ENCODE measurements at regions of chr2 and their contacts with region 1.

Region 1: GRCh38 chr2:197191177-197191939 is 119.2 kb downstream of the ANKRD44 start:
- DNase-seq: no peak
- H3K4me3 Mint-ChIP-seq: no peak overlapping the region
- H3K27ac Mint-ChIP-seq: peak overlapping the region; percentile 62
- H3K4me1 Mint-ChIP-seq: peaks cover 71% of the 10 kb centered on the region
- H3K27me3 Mint-ChIP-seq: no peaks in the 10 kb centered on the region

Region 2: DNA sequence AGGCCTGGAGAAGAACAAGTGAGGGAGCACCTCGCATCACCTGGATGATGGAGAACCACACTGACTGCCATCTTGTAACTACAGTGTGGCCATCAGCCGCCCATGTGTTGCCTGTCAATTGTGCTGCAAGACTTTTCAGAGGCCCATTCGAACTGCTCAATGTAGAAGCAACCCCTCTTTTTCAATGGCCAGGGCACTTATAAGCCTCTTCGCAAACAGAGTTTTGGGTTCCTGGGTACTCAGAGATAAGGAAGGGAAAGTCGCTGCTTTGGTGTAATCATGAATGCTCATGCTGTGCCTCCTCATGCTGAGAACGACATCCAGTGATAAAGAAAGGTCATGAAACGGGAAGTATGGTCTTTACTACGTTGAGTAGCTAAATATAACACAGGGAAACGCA is 1678.2 kb before region 1 on chr2:
- CTCF ChIA-PET with region 1: no interaction called
- POLR2A ChIA-PET with region 1: no interaction called
- intact Hi-C with region 1: no loop called
- DNase-seq: no peak
- H3K4me3 Mint-ChIP-seq: no peak overlapping the region
- H3K27ac Mint-ChIP-seq: no peak overlapping the region
- H3K4me1 Mint-ChIP-seq: peaks cover 10% of the 10 kb centered on the region
- H3K27me3 Mint-ChIP-seq: no peaks in the 10 kb centered on the region

Region 3: GRCh38 chr2:197113275-197113711 is 78.1 kb before region 1 on chr2:
- CTCF ChIA-PET with region 1: interaction called, 28 read pairs
- POLR2A ChIA-PET with region 1: no interaction called
- intact Hi-C with region 1: no loop called
- DNase-seq: no peak
- H3K4me3 Mint-ChIP-seq: no peak overlapping the region
- H3K27ac Mint-ChIP-seq: peak overlapping the region; percentile 76
- H3K4me1 Mint-ChIP-seq: peaks cover 20% of the 10 kb centered on the region
- H3K27me3 Mint-ChIP-seq: no peaks in the 10 kb centered on the region

Region 4: DNA sequence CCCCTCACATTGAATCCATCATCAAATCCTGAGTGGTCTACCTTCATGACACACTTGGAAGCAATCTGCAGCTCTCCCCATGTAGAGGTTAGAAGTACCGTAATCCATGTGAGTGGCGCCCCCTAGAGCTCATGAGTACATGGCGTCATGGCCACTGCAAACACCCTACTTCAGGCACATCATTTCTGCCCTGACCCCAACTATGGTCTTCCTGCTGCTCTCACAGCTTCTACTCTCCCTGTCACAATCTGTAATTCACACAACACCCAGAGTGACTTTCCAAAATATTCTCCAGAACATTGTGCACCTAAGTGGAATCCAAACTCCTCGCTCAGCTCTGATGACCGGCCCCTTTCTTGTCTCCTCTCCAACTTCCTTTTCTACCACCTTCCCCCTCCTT is 22.7 kb before region 1 on chr2:
- CTCF ChIA-PET with region 1: interaction called, 33 read pairs
- POLR2A ChIA-PET with region 1: no interaction called
- intact Hi-C with region 1: loop called (anchors 2 kb)
- DNase-seq: peak; percentile 84
- H3K4me3 Mint-ChIP-seq: no peak overlapping the region
- H3K27ac Mint-ChIP-seq: peak overlapping the region; percentile 73
- H3K4me1 Mint-ChIP-seq: peaks cover 72% of the 10 kb centered on the region
- H3K27me3 Mint-ChIP-seq: no peaks in the 10 kb centered on the region

Region 5: GRCh38 chr2:197209742-197210408 is 18.5 kb after region 1 on chr2:
- CTCF ChIA-PET with region 1: interaction called, 19 read pairs
- POLR2A ChIA-PET with region 1: interaction called, 3 read pairs
- intact Hi-C with region 1: no loop called
- DNase-seq: peak; percentile 86
- H3K4me3 Mint-ChIP-seq: peak overlapping the region; percentile 58
- H3K27ac Mint-ChIP-seq: peak overlapping the region; percentile 94
- H3K4me1 Mint-ChIP-seq: peaks cover 98% of the 10 kb centered on the region
- H3K27me3 Mint-ChIP-seq: no peaks in the 10 kb centered on the region

Region 6: DNA sequence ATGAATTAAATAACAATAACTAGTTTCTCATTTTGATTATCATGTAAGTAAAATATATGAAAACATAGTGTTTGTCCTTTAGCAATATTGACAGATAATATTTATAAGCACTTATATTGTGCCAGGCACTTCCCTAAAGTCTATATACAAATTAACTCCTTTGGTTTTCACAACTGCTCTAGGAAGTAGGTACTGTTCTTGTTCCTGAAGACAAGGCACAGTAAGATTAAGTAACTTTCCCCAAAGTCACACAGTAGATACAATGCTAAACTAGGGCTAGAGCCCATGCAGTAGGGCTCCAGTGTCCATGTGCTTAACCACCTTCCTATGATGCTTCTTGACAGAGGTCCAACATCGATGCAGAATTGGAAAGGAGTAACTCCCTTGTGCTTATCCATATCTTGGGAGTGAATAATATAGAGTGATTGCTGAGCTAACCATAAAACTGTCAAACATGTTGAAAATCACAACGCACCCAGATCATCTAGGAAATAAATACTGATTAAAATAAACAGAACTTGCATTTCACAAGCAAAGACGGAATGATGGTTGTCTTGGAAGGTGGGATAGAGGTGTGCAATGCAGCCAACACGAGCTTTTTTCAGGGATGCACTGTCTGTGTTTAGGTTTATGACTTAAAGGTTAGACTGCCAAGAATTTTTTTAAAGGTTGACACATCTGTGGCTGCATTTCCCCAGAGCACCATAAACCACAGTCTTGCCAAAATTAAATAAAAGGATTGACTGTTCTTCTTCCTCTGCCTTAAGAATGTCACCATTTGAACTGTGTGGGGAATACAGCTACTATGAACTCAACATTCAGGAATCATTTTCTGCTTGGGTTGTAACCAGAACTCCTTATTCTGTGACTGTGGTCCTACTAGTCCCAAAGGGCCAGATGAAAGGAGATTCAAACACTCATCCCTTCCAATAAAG is 38.4 kb after region 1 on chr2:
- CTCF ChIA-PET with region 1: interaction called, 16 read pairs
- POLR2A ChIA-PET with region 1: no interaction called
- intact Hi-C with region 1: no loop called
- DNase-seq: no peak
- H3K4me3 Mint-ChIP-seq: no peak overlapping the region
- H3K27ac Mint-ChIP-seq: peak overlapping the region; percentile 67
- H3K4me1 Mint-ChIP-seq: peaks cover 80% of the 10 kb centered on the region
- H3K27me3 Mint-ChIP-seq: no peaks in the 10 kb centered on the region

Region 7: GRCh38 chr2:197263077-197263476 is 71.7 kb after region 1 on chr2:
- CTCF ChIA-PET with region 1: interaction called, 10 read pairs
- POLR2A ChIA-PET with region 1: no interaction called
- intact Hi-C with region 1: no loop called
- DNase-seq: no peak
- H3K4me3 Mint-ChIP-seq: no peak overlapping the region
- H3K27ac Mint-ChIP-seq: peak overlapping the region; percentile 90
- H3K4me1 Mint-ChIP-seq: peaks cover 89% of the 10 kb centered on the region
- H3K27me3 Mint-ChIP-seq: no peaks in the 10 kb centered on the region

Region 8: GRCh38 chr2:197378494-197379307 is 187.3 kb after region 1 on chr2:
- CTCF ChIA-PET with region 1: interaction called, 21 read pairs
- POLR2A ChIA-PET with region 1: no interaction called
- intact Hi-C with region 1: loop called (anchors 1 kb)
- DNase-seq: peak; percentile 72
- H3K4me3 Mint-ChIP-seq: no peak overlapping the region
- H3K27ac Mint-ChIP-seq: no peak overlapping the region
- H3K4me1 Mint-ChIP-seq: peaks cover 15% of the 10 kb centered on the region
- H3K27me3 Mint-ChIP-seq: peaks cover 4% of the 10 kb centered on the region

Region 9: DNA sequence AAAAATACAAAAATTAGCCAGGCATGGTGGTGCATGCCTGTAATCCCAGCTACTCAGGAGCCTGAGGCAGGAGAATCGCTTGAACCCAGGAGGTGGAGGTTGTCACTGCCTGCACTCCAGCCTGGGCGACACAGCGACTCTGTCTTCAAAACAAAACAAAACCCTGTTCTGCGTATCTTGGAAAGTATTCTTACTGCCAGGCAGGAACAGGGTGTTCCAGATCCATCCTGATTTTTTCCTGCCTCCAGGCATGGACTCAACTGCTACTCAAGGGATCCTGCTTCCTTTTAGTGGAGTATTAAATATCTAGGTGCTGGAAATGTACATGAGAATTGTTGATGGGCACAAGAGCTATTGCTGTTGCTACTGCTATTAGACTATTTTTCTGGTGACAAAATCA is 296.0 kb after region 1 on chr2:
- CTCF ChIA-PET with region 1: no interaction called
- POLR2A ChIA-PET with region 1: no interaction called
- intact Hi-C with region 1: no loop called
- DNase-seq: no peak
- H3K4me3 Mint-ChIP-seq: no peak overlapping the region
- H3K27ac Mint-ChIP-seq: peak overlapping the region; percentile 62
- H3K4me1 Mint-ChIP-seq: peaks cover 20% of the 10 kb centered on the region
- H3K27me3 Mint-ChIP-seq: no peaks in the 10 kb centered on the region

Region 10: GRCh38 chr2:197675711-197676188 is 484.4 kb after region 1 on chr2:
- CTCF ChIA-PET with region 1: no interaction called
- POLR2A ChIA-PET with region 1: no interaction called
- intact Hi-C with region 1: no loop called
- DNase-seq: no peak
- H3K4me3 Mint-ChIP-seq: no peak overlapping the region
- H3K27ac Mint-ChIP-seq: no peak overlapping the region
- H3K4me1 Mint-ChIP-seq: no peaks in the 10 kb centered on the region
- H3K27me3 Mint-ChIP-seq: peaks cover 12% of the 10 kb centered on the region

Region 11: DNA sequence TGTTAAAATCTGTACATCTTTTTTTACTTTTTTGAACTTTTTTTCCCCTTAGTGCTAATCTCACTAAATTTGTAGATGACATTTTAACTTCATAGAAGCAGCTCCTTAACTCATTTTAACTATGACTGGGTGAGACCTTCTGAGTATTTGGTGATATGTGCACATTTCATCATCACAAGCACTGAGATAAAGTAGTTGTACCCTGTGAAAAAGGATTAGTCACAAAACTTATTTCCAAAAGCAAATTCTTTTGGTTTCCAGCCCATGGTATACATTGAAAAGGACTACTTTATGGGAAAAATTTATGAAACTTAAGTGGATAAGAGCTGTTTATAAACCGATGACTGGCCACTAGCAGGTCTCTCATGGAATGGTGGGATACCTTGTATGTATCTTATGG is 1194.5 kb after region 1 on chr2:
- CTCF ChIA-PET with region 1: no interaction called
- POLR2A ChIA-PET with region 1: no interaction called
- intact Hi-C with region 1: no loop called
- DNase-seq: no peak
- H3K4me3 Mint-ChIP-seq: no peak overlapping the region
- H3K27ac Mint-ChIP-seq: no peak overlapping the region
- H3K4me1 Mint-ChIP-seq: no peaks in the 10 kb centered on the region
- H3K27me3 Mint-ChIP-seq: peaks cover 19% of the 10 kb centered on the region